ENCODE measurements at regions of chr2 and their contacts with region 1.

Region 1: DNA sequence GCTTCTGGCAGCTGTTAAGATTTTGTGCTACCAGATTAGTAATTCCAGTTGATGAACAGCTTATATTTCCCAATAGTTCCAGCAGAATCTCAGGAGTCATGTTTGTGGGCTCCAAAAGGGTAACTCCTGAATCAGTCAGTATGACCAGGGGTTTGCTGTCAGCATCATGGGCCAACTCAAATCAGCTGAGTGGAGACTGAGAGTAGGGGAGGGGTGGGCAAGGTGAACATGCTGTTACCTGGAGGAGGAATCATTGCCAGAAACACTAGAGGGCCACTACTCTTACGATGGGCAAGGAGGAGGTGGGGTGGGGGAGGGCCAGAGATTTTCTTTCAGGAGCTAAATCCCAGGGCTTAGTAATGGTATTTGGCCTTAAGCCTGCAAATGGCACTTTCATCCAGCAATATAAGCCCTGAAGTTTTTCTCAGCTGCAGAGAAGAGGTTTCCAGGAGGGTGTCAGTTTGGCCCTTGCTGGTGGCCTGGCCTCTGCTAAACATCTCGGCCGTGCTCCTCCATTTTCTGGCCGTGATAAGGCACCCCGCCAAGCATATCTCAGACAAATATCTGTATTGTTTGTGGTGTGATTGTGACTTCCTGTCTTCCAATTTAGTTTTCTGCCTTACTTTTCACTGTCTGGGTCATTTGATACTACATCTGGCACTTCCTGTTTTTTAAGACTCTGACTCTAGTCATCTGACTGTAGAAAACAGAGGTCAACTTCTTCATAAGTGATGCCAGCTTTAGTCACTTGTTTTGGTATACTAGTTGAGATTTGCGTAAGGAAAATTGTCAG is 120.5 kb upstream of the CXCR4 start:
- DNase-seq: peak; percentile 12
- H3K4me3 Mint-ChIP-seq: peak overlapping the region; percentile 27
- H3K27ac Mint-ChIP-seq: peak overlapping the region; percentile 88
- H3K4me1 Mint-ChIP-seq: peaks cover 49% of the 10 kb centered on the region
- H3K27me3 Mint-ChIP-seq: no peaks in the 10 kb centered on the region

Region 2: DNA sequence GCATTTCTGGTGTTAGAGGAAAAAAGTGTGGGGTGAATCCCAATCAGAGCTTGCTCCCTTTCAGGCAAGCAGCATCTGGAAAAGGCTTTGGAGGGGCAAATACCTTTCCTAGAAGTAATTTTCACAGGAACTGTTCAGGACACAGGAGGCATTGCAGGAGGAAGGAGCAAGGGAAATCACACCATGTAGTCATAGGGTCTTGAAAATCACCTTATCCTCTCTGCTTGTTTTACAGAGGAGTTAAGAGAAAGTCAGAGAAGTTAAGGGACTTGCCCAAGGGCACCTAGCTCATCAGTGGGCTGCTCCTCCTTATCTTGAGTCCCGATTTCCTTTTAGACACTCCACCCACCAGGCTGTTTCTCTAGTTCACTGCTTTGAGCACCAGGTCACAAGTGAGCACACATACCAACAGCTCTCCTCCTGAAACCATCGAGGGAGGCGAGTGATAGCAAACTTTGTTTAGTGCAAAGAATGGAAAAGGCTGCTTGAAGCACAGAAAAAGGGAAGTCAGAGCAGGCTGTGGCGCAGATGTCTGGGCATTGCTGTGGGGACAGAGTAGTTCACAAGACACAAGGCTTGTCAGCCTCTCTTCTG is 31.4 kb before region 1 on chr2:
- intact Hi-C with region 1: loop called (anchors 1 kb)
- DNase-seq: no peak
- H3K4me3 Mint-ChIP-seq: no peak overlapping the region
- H3K27ac Mint-ChIP-seq: peak overlapping the region; percentile 92
- H3K4me1 Mint-ChIP-seq: peaks cover 33% of the 10 kb centered on the region
- H3K27me3 Mint-ChIP-seq: peaks cover 2% of the 10 kb centered on the region

Region 3: GRCh38 chr2:136281281-136282114 is 43.0 kb after region 1 on chr2:
- intact Hi-C with region 1: loop called (anchors 5 kb)
- DNase-seq: peak; percentile 56
- H3K4me3 Mint-ChIP-seq: peak overlapping the region; percentile 38
- H3K27ac Mint-ChIP-seq: peak overlapping the region; percentile 81
- H3K4me1 Mint-ChIP-seq: peaks cover 67% of the 10 kb centered on the region
- H3K27me3 Mint-ChIP-seq: no peaks in the 10 kb centered on the region

Region 4: GRCh38 chr2:136310797-136311603 is 72.5 kb after region 1 on chr2:
- intact Hi-C with region 1: loop called (anchors 1 kb)
- DNase-seq: no peak
- H3K4me3 Mint-ChIP-seq: peak overlapping the region; percentile 38
- H3K27ac Mint-ChIP-seq: peak overlapping the region; percentile 83
- H3K4me1 Mint-ChIP-seq: peaks cover 38% of the 10 kb centered on the region
- H3K27me3 Mint-ChIP-seq: peaks cover 4% of the 10 kb centered on the region

Region 5: DNA sequence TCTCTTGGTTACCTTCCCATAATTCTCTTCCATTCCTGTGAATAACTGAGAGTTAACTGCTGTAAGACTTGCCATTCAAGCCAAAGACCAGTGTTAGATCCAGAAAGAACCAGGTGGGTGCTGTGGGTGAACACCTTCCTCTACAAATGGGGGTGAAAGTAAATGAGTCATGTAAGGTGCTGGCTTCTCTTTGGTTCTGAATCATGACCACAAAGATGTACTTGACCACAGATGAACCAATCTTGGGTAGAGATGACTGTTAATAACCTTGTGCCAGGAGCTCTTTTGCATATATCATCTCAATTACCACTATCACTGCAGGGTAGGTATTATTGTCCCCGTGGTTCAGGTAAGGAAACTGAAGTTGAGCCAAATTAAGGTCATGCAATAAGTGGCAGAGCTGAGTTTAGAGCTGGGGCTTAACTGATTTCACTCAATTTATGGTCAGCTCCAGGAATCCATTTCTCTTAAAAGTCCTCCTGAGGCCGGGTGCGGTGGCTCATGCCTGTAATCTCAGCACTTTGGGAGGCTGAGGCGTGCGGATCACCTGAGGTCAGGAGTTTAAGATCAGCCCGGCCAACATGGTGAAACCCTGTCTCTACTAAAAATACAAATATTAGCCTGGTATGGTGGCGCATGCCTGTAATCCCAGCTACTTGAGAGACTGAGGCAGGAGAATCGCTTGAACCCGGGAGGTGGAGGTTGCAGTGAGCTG is 124.4 kb after region 1 on chr2:
- intact Hi-C with region 1: loop called (anchors 1 kb)
- DNase-seq: no peak
- H3K4me3 Mint-ChIP-seq: peak overlapping the region; percentile 21
- H3K27ac Mint-ChIP-seq: peak overlapping the region; percentile 69
- H3K4me1 Mint-ChIP-seq: peaks cover 57% of the 10 kb centered on the region
- H3K27me3 Mint-ChIP-seq: peaks cover 4% of the 10 kb centered on the region

Region 6: GRCh38 chr2:136527560-136527959 is 289.1 kb after region 1 on chr2:
- intact Hi-C with region 1: no loop called
- DNase-seq: no peak
- H3K4me3 Mint-ChIP-seq: no peak overlapping the region
- H3K27ac Mint-ChIP-seq: no peak overlapping the region
- H3K4me1 Mint-ChIP-seq: no peaks in the 10 kb centered on the region
- H3K27me3 Mint-ChIP-seq: no peaks in the 10 kb centered on the region

Region 7: GRCh38 chr2:136738044-136738443 is 499.6 kb after region 1 on chr2:
- intact Hi-C with region 1: no loop called
- DNase-seq: no peak
- H3K4me3 Mint-ChIP-seq: no peak overlapping the region
- H3K27ac Mint-ChIP-seq: no peak overlapping the region
- H3K4me1 Mint-ChIP-seq: no peaks in the 10 kb centered on the region
- H3K27me3 Mint-ChIP-seq: no peaks in the 10 kb centered on the region